ENCODE measurements at regions of chr12 and their contacts with region 1.

Region 1: DNA sequence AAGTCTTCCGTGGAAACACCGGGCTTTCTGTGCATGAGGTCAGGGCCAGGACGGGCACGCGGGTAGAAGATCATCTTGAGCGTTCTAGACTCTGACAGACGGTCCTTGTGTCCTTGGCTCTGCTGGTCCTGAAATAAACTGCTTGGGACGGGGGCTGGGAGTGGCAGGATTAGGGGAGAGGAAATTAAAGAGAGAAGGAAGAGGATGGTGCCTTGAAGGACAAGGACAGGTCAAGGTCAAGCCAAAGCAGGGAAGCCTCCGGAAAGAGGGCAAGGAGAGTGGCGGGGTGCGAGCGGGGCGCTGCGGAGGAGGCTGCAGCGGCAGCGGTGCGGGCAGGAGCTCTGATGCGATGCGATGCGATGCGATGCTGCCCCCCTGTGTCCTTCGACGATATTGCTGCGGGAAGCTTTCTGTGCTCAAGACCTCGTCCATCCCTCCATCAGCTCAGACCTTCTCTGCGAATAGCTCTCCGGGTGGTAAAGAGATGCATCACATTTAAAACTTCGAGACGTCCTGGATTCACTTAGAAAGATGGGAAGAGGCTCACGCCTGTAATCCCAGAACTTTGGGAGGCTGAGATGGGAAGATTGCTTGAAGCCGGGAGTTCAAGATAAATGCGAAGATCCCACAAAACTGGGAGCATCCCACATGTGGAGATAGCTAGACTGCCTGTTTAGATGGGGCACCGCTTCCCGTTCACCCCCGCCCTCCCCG is 110.1 kb upstream of the TMEM132D start:
- DNase-seq: peak; percentile 26
- ATAC-seq: peak; percentile 96
- H3K4me3 ChIP-seq: no peak overlapping the region
- H3K27ac ChIP-seq: no peak overlapping the region
- H3K4me1 ChIP-seq: no peaks in the 10 kb centered on the region
- H3K27me3 ChIP-seq: peaks cover 4 to 55% of the 10 kb centered on the region in 2 experiments; a peak in 3 of 5 replicates
- CTCF ChIP-seq: peak; percentile 81
- EP300 ChIP-seq: no peak
- POLR2A ChIP-seq: no peak
- RAD21 ChIP-seq: peak; percentile 56

Region 2: DNA sequence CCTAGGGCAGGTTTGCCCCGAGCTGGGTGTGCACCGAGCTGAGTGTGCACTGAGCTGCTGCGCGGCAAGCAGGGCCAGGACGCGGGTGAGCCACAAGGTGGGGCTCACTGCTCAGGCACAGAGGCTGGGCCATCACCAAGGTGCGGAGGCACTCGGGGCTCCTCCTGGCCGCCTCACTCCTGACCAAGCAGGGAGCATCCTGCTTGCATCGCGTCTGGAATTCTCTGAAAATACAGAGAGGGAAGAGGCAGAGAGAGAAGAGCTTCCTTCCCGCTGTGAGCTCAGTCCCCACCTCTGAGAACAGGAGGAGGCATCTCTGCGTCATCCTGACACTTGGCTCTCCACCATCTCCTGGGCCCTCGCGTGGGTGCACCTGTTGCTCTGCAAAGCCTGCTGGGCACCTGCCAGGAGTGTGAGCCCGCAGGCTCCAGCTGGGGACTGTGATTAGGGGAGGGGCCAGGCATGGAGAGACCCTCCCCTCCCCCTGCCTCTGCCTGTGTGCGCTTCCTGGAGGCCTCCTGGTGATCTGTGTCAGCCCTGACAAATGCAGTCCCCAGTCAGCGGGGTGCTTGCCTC is 1044.4 kb before region 1 on chr12:
- CTCF ChIA-PET with region 1: no interaction called
- POLR2A ChIA-PET with region 1: no interaction called
- in situ Hi-C with region 1: loop called (anchors 10 kb)
- intact Hi-C with region 1: no loop called
- DNase-seq: no peak
- ATAC-seq: peak; percentile 97
- H3K4me3 ChIP-seq: no peak overlapping the region
- H3K27ac ChIP-seq: no peak overlapping the region
- H3K4me1 ChIP-seq: peaks cover 8% of the 10 kb centered on the region; the same call in 1 of the 2 replicates
- H3K27me3 ChIP-seq: peaks cover 0 to 2% of the 10 kb centered on the region in 2 experiments; a peak in 1 of 5 replicates
- CTCF ChIP-seq: peak; percentile 88
- EP300 ChIP-seq: no peak
- POLR2A ChIP-seq: no peak
- RAD21 ChIP-seq: peak; percentile 70

Measured in HepG2 (cell line).